ENCODE measurements at regions of chr12 and their contacts with region 1.

Region 1: DNA sequence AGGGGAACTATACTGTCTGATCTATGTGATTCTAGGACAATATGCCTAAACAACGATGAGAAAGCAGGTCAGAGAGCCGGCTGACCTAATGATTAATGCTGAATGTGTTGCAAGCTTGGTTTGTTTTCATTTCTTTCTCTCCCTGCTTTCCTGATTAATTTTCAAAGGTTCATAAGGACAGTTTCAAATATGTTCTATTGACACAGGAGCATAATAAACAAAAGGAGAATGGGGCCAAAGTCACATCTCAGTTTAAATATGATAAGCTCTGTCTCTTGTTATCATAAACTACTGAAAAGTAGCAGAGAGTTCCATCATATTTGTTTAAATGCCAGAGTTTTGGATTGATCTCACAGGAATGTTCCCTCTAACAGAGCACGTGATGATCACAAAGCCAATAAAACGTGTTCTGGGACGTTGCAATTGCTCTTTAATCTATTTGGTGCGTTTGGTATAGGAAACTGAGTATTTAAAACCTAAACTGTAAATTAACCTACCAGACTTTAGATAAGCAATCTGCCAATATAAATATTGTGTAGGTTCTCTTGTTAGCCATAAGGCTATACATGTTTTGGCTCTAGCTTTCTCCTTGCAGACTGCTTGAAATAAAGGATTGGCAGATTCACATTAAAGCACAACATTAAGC is 3.7 kb upstream of the HSD17B6 start:
- DNase-seq: no peak
- H3K4me3 ChIP-seq: no peak overlapping the region
- H3K27ac ChIP-seq: no peak overlapping the region
- H3K4me1 ChIP-seq: no peaks in the 10 kb centered on the region
- H3K27me3 ChIP-seq: no peaks in the 10 kb centered on the region
- CTCF ChIP-seq: no peak

Region 2: DNA sequence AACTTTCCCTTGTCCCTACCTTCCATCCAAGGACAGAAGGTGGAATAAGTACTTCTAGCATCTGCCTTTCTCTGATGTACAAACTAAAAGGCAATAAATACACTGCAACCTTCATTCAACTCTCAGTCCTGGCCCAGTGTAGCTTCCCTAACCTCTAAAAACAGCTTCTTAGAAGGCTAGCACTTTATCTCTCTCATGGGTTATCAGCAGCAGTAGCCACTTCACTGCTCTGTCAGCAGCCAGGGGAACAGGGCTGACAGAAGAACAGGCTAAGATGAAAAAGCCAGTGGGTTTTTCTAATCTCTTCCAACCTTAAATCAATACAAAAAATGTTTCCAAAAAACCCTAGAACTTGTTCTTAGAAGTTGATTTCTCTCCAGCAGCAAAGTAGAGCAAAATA is 142.5 kb before region 1 on chr12:
- CTCF ChIA-PET with region 1: no interaction called
- POLR2A ChIA-PET with region 1: no interaction called
- intact Hi-C with region 1: no loop called
- DNase-seq: no peak
- H3K4me3 ChIP-seq: no peak overlapping the region
- H3K27ac ChIP-seq: no peak overlapping the region
- H3K4me1 ChIP-seq: no peaks in the 10 kb centered on the region
- H3K27me3 ChIP-seq: no peaks in the 10 kb centered on the region
- CTCF ChIP-seq: no peak

Region 3: GRCh38 chr12:57063991-57064685 is 304.8 kb after region 1 on chr12:
- CTCF ChIA-PET with region 1: interaction called, 3 read pairs
- POLR2A ChIA-PET with region 1: no interaction called
- intact Hi-C with region 1: loop called (anchors 5 kb)
- DNase-seq: peak; percentile 68
- H3K4me3 ChIP-seq: peak overlapping the region; percentile 31
- H3K27ac ChIP-seq: peak overlapping the region; percentile 77
- H3K4me1 ChIP-seq: peaks cover 29% of the 10 kb centered on the region
- H3K27me3 ChIP-seq: no peaks in the 10 kb centered on the region
- CTCF ChIP-seq: no peak

Measured in A673 (cell line).